Colonic mucosa (tissue), 4 donors: ENCODE measurements at regions of chr15 and their contacts with region 1.

Region 1: DNA sequence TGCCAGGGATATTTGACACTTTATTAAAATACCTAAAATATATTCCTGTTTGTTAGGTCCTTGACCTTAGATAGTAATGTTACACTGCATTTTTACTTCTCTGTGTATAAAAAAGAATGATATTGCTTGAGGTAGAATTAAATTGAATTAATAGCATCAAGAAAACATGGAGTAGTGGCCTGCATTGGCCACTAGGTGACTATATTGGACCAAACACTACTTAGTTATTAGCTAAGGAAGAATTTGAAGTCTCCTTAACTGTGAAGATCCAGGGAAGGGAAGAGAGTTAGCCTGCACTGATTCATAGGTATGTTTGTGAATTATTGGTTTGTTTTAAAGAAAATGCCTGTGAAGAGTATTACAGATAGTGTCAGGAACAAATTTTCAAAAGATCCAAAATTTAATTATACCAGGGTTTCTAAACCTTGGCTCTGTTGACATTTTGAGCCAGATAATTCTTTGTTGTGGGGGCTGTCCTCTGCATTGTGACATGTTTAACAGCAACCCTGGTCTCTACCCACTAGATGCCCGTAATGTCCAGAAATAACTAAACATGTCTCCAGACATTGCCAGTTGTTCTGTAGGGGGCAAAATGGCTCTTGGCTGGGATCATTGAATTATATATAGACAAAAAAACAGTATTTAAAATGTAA is 103.6 kb upstream of the THSD4 start:
- DNase-seq: peak; percentile 23
- H3K4me3 ChIP-seq: no peak overlapping the region
- H3K27ac ChIP-seq: no peak overlapping the region
- H3K4me1 ChIP-seq: no peaks in the 10 kb centered on the region
- H3K27me3 ChIP-seq: no peaks in the 10 kb centered on the region
- CTCF ChIP-seq: peak; percentile 66

Region 2: GRCh38 chr15:70826634-70827033 is 185.0 kb before region 1 on chr15:
- intact Hi-C with region 1: no loop called
- DNase-seq: peak; percentile 32
- H3K4me3 ChIP-seq: no peak overlapping the region
- H3K27ac ChIP-seq: no peak overlapping the region
- H3K4me1 ChIP-seq: no peaks in the 10 kb centered on the region
- H3K27me3 ChIP-seq: no peaks in the 10 kb centered on the region
- CTCF ChIP-seq: no peak

Region 3: GRCh38 chr15:71103102-71103676 is 91.6 kb after region 1 on chr15:
- intact Hi-C with region 1: loop called (anchors 5 kb)
- DNase-seq: no peak
- H3K4me3 ChIP-seq: no peak overlapping the region
- H3K27ac ChIP-seq: no peak overlapping the region
- H3K4me1 ChIP-seq: no peaks in the 10 kb centered on the region
- H3K27me3 ChIP-seq: no peaks in the 10 kb centered on the region
- CTCF ChIP-seq: peak; percentile 54